ENCODE measurements at regions of chr4 and their contacts with region 1.

Region 1: GRCh38 chr4:146175541-146176453 is at the start of gene LSM6:
- DNase-seq: peak; percentile 39 to 91
- H3K4me3 ChIP-seq: peak within 1 kb of the TSS; percentile 95 to 99
- H3K27ac ChIP-seq: peak within 1 kb of the TSS; percentile 95
- H3K4me1 ChIP-seq: peaks cover 2 to 17% of the 10 kb centered on the region in 2 donors
- H3K27me3 ChIP-seq: no peaks in the 10 kb centered on the region
- CTCF ChIP-seq: peak in 1 of 3 experiments; percentile 21
- total RNA-seq, gene LSM6: 10.7 TPM

Region 2: GRCh38 chr4:145840162-145840768 is 335.5 kb before region 1 on chr4:
- intact Hi-C with region 1: loop called (anchors 10 kb)
- DNase-seq: no peak
- H3K4me3 ChIP-seq: no peak overlapping the region
- H3K27ac ChIP-seq: no peak overlapping the region
- H3K4me1 ChIP-seq: no peaks in the 10 kb centered on the region
- H3K27me3 ChIP-seq: no peaks in the 10 kb centered on the region
- CTCF ChIP-seq: peak in 2 of 3 experiments; percentile 37 to 55

Region 3: DNA sequence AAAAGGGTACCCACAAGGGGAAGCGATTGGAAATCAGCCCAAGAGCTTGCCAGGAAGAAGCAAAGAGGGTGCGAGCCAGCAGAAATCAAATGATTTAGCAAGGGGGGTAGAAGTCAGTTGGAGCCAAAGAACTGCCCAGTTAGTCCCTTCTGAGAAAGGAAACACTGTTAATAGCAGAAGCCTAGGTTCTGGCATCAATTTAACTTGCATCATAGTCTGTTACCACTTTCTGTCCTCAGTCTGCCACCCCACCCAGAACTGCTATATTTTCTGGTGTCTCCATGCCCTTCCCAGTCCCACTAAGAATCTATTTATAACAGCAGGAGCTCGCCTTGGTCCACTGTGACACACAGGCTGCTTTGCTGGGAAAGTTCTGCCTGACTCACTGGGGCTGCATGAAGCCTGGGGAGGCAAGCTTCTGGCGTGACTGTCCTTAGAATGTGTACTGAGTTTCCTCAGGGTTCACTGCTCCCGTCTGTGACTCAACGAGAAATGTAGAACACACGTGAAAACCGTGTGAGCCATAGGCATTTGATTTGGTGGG is 927.7 kb after region 1 on chr4:
- intact Hi-C with region 1: loop called (anchors 10 kb)
- DNase-seq: peak; percentile 73 to 95
- H3K4me3 ChIP-seq: no peak overlapping the region
- H3K27ac ChIP-seq: peak overlapping the region; percentile 72 to 78
- H3K4me1 ChIP-seq: peaks cover 0 to 14% of the 10 kb centered on the region in 2 donors
- H3K27me3 ChIP-seq: no peaks in the 10 kb centered on the region
- CTCF ChIP-seq: no peak

Measured in ascending aorta (tissue), 2 donors.